CD8-positive, alpha-beta T cell (primary cell): ENCODE measurements at regions of chr9 and their contacts with region 1.

Region 1: GRCh38 chr9:8589476-8589875 is 789.9 kb upstream of the DMAC1 start:
- DNase-seq: no peak
- ATAC-seq: no peak
- H3K4me3 ChIP-seq: no peak overlapping the region
- H3K4me3 Mint-ChIP-seq: no peak overlapping the region
- H3K27ac ChIP-seq: no peak overlapping the region
- H3K27ac Mint-ChIP-seq: no peak overlapping the region
- H3K4me1 ChIP-seq: no peaks in the 10 kb centered on the region
- H3K4me1 Mint-ChIP-seq: no peaks in the 10 kb centered on the region
- H3K27me3 ChIP-seq: no peaks in the 10 kb centered on the region
- H3K27me3 Mint-ChIP-seq: peaks cover under 1% of the 10 kb centered on the region
- CTCF ChIP-seq: no peak

Region 2: DNA sequence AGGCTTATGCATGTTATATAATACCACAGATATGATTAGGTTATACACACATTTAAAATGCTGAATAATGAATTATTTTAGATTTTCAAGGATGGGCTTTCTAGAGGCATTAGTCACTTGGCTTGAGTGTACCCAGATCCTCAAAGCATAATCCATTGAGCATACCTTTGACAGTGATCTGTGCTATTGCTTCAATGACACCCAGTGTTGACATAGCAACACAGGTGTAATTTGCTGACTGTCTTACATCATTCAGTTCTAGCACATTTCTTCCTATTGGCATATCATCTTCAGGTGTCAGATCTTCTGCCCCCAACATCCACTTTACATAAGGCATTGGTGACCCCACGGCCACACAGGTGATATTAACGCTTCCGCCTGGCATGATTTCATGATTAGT is 68.4 kb before region 1 on chr9:
- CTCF ChIA-PET with region 1: no interaction called
- POLR2A ChIA-PET with region 1: no interaction called
- intact Hi-C with region 1: no loop called
- DNase-seq: no peak
- ATAC-seq: no peak
- H3K4me3 ChIP-seq: no peak overlapping the region
- H3K4me3 Mint-ChIP-seq: no peak overlapping the region
- H3K27ac ChIP-seq: no peak overlapping the region
- H3K27ac Mint-ChIP-seq: no peak overlapping the region
- H3K4me1 ChIP-seq: no peaks in the 10 kb centered on the region
- H3K4me1 Mint-ChIP-seq: no peaks in the 10 kb centered on the region
- H3K27me3 ChIP-seq: no peaks in the 10 kb centered on the region
- H3K27me3 Mint-ChIP-seq: no peaks in the 10 kb centered on the region
- CTCF ChIP-seq: no peak

Region 3: DNA sequence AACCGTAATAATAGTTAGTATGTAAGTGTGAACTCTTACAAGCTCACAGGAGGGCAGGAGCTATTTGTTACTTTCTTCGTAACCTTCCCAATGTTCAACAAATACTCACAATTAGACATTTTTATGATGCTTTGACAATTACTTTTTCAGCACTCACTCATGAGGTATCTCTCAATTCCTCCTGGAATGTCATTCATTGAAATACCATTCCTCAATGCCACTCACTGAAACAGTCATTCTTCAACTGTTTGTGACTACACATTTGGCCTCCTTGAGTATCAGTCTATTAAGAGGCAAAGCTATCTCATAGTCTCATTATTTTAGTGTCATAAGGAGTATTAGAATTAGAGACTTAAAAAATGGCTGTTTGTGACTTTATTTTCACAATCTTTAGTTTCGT is 55.8 kb before region 1 on chr9:
- CTCF ChIA-PET with region 1: no interaction called
- POLR2A ChIA-PET with region 1: no interaction called
- intact Hi-C with region 1: no loop called
- DNase-seq: no peak
- ATAC-seq: no peak
- H3K4me3 ChIP-seq: no peak overlapping the region
- H3K4me3 Mint-ChIP-seq: no peak overlapping the region
- H3K27ac ChIP-seq: no peak overlapping the region
- H3K27ac Mint-ChIP-seq: no peak overlapping the region
- H3K4me1 ChIP-seq: no peaks in the 10 kb centered on the region
- H3K4me1 Mint-ChIP-seq: no peaks in the 10 kb centered on the region
- H3K27me3 ChIP-seq: no peaks in the 10 kb centered on the region
- H3K27me3 Mint-ChIP-seq: no peaks in the 10 kb centered on the region
- CTCF ChIP-seq: no peak

Region 4: DNA sequence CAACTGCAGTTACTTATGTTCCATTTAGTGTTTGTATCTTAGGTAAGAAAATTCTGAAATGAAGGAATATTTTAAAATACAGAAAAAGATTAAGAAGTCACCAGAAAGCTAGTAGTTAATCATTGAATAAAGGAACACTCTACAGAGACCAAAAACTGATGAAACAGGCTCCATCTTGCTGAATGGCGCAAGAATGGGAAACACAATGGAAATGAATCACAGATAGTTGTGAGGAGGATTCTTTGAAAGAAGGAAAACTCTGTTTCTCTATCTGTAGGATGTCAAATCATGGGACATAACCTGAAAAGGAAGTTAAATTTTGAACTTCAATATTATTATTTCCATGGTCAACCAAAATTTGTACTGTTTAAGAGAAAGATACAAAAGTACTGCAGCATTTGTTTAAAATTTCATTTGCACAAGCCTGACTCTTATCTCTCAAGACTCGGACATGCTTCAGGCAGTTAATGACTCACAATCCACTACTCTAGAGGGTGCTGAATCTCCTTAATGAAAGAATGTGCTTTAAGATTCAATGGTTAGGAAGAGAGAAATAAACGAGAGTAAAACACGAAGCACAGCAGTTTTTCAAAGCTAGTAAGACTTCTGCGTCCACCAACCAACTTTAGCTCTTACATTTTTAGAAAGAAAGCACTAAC is 274.5 kb after region 1 on chr9:
- CTCF ChIA-PET with region 1: no interaction called
- POLR2A ChIA-PET with region 1: no interaction called
- intact Hi-C with region 1: no loop called
- DNase-seq: no peak
- ATAC-seq: no peak
- H3K4me3 ChIP-seq: no peak overlapping the region
- H3K4me3 Mint-ChIP-seq: no peak overlapping the region
- H3K27ac ChIP-seq: no peak overlapping the region
- H3K27ac Mint-ChIP-seq: no peak overlapping the region
- H3K4me1 ChIP-seq: no peaks in the 10 kb centered on the region
- H3K4me1 Mint-ChIP-seq: peaks cover 2% of the 10 kb centered on the region
- H3K27me3 ChIP-seq: no peaks in the 10 kb centered on the region
- H3K27me3 Mint-ChIP-seq: peaks cover 8% of the 10 kb centered on the region
- CTCF ChIP-seq: no peak

Region 5: DNA sequence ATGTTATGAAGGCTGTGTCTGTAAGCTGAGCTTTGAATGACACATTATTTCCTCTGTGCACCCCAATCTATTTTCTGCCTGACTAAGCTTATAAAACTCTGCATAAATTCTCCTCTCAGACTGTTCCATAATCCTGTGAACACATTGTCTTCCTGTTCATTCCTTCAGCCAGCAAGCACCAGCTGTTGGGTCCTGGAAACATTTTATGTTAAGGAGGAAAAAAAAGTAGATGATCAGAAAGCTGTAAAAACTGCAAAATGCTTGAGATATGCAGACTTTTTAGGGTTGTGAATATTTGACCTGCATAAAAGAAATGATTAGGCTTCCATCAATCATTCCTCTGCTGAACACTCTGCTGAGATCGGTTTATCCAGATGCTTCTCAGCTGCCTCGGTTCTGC is 456.1 kb after region 1 on chr9:
- CTCF ChIA-PET with region 1: no interaction called
- POLR2A ChIA-PET with region 1: no interaction called
- intact Hi-C with region 1: no loop called
- DNase-seq: no peak
- ATAC-seq: no peak
- H3K4me3 ChIP-seq: no peak overlapping the region
- H3K4me3 Mint-ChIP-seq: no peak overlapping the region
- H3K27ac ChIP-seq: no peak overlapping the region
- H3K27ac Mint-ChIP-seq: no peak overlapping the region
- H3K4me1 ChIP-seq: no peaks in the 10 kb centered on the region
- H3K4me1 Mint-ChIP-seq: no peaks in the 10 kb centered on the region
- H3K27me3 ChIP-seq: no peaks in the 10 kb centered on the region
- H3K27me3 Mint-ChIP-seq: no peaks in the 10 kb centered on the region
- CTCF ChIP-seq: no peak

Region 6: GRCh38 chr9:9448796-9449195 is 859.3 kb after region 1 on chr9:
- CTCF ChIA-PET with region 1: no interaction called
- POLR2A ChIA-PET with region 1: no interaction called
- intact Hi-C with region 1: loop called in 1 of 2 experiments (anchors 5 kb)
- DNase-seq: no peak
- ATAC-seq: no peak
- H3K4me3 ChIP-seq: no peak overlapping the region
- H3K4me3 Mint-ChIP-seq: no peak overlapping the region
- H3K27ac ChIP-seq: no peak overlapping the region
- H3K27ac Mint-ChIP-seq: no peak overlapping the region
- H3K4me1 ChIP-seq: no peaks in the 10 kb centered on the region
- H3K4me1 Mint-ChIP-seq: no peaks in the 10 kb centered on the region
- H3K27me3 ChIP-seq: no peaks in the 10 kb centered on the region
- H3K27me3 Mint-ChIP-seq: no peaks in the 10 kb centered on the region
- CTCF ChIP-seq: no peak